Lower leg skin (tissue), 4 donors: ENCODE measurements at regions of chr11 and their contacts with region 1.

Region 1: GRCh38 chr11:23041001-23041503 is 180.8 kb upstream of the CCDC179 start:
- DNase-seq: no peak
- H3K4me3 ChIP-seq: no peak overlapping the region
- CTCF ChIP-seq: no peak
- POLR2A ChIP-seq: no peak

Region 2: DNA sequence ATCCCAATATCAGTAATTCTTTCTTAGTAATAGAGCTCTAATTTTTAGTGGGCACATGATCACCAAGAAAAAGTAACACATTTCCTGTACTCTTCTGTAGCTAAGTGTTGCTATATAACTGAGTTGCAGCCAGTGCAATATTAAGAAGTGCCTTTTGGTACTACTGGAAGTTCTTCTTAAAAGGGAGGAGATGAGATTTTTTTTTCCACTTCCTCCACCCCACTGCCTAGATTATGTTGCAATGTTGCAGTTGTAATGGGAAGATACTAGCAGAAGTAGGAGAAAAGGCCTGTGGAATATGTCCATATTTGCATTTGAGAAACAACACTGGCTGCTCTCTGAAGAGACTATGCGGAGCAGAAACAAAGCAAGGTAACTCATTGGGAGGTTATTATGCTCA is 1128.8 kb before region 1 on chr11:
- intact Hi-C with region 1: loop called (anchors 5 kb)
- DNase-seq: no peak
- H3K4me3 ChIP-seq: no peak overlapping the region
- CTCF ChIP-seq: no peak
- POLR2A ChIP-seq: no peak

Region 3: GRCh38 chr11:22304337-22304961 is 736.6 kb before region 1 on chr11:
- intact Hi-C with region 1: no loop called
- DNase-seq: no peak
- H3K4me3 ChIP-seq: no peak overlapping the region
- CTCF ChIP-seq: no peak
- POLR2A ChIP-seq: no peak